WTC11 (cell line): ENCODE measurements at regions of chr2 and their contacts with region 1.

Region 1: DNA sequence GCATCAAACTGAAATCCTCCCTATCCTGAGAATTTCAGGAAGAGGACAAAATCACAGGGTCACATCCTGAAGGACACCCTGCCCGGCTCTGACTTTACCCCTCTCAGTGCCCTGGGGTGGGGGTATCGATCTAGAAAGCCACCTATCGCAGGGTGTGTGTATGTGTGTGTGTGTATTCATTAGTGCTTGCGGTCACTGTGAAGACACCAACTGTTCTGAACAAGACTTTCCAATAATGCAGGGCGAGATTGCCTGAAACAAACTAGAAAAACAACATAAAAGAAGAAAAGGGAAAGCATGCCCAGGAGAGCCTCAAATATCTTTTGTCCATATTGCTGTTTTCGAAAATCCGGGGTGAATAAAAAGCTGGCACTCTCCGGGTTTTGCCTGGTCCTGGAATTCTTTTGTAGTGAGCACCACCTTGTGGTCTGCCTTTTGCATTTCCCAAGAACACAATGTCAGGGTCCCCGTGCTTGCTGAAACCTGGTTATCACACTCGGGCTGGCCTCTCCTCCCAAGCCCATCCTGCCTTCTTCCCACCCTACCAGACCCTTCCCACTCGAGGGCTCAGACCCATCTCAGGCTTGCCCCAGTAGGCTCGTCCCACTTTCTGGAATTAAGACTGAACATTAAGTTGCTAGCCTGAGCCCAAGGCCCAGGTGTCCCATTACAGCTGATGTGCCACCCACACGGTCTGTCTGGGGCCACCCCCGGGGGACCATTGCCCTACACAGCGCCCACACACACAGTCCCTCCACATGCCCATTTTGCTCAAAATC is 25.0 kb upstream of the COPS8 start:
- DNase-seq: peak; percentile 61
- ATAC-seq: peak; percentile 85
- H3K4me3 Mint-ChIP-seq: no peak overlapping the region
- H3K27ac Mint-ChIP-seq: no peak overlapping the region
- H3K4me1 Mint-ChIP-seq: peaks cover 12% of the 10 kb centered on the region
- H3K27me3 Mint-ChIP-seq: no peaks in the 10 kb centered on the region
- CTCF ChIP-seq: 0 out of 2 replicates have a peak, but pooled peaks have one; percentile 29

Region 2: DNA sequence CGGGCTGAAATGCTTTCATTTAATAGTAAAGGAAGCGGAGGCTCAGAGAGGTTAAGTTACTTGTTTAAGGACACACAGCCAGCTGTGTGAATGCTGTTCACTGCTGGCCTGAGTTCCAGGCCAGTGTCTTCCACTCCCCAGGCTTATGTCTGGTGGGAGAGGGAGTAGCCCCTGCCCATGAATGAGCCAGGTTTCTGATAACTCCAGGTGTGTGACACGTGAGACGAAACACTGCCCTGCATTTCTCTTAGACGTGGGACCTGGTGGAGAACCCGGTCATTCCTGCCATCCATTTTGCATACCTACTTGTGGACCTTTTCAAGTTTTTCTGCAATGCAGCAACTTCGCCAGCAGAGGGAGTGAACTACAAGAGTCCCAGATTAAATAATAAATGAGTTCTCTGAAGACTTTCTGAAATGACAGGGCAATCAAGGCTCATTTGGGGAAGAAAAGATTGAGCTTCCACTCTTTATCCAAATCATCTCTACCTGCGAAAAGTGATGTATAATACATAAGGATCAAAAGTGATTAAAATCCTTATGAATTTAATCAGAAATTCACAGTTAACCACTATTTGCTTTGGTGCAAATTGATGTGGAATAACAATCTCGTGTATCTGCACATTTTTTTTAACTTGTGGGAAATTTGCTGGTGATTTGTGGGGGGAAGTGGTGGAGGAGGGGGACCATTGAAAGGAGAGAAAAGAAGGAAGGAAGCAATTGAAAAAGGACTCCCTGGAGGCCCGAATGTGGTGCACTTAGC is 717.1 kb before region 1 on chr2:
- CTCF ChIA-PET with region 1: interaction called, 11 read pairs
- POLR2A ChIA-PET with region 1: no interaction called
- DNase-seq: peak; percentile 72
- ATAC-seq: no peak; the same call in 1 of the 2 replicates
- H3K4me3 Mint-ChIP-seq: no peak overlapping the region
- H3K27ac Mint-ChIP-seq: no peak overlapping the region
- H3K4me1 Mint-ChIP-seq: peaks cover 39% of the 10 kb centered on the region
- H3K27me3 Mint-ChIP-seq: no peaks in the 10 kb centered on the region
- CTCF ChIP-seq: peak; percentile 84